ENCODE measurements at regions of chr4 and their contacts with region 1.

Region 1: GRCh38 chr4:80446664-80447063 is 111.1 kb downstream of the CFAP299 start:
- DNase-seq: no peak
- H3K4me3 Mint-ChIP-seq: no peak overlapping the region
- H3K27ac Mint-ChIP-seq: no peak overlapping the region
- H3K4me1 Mint-ChIP-seq: no peaks in the 10 kb centered on the region
- H3K27me3 Mint-ChIP-seq: no peaks in the 10 kb centered on the region

Region 2: DNA sequence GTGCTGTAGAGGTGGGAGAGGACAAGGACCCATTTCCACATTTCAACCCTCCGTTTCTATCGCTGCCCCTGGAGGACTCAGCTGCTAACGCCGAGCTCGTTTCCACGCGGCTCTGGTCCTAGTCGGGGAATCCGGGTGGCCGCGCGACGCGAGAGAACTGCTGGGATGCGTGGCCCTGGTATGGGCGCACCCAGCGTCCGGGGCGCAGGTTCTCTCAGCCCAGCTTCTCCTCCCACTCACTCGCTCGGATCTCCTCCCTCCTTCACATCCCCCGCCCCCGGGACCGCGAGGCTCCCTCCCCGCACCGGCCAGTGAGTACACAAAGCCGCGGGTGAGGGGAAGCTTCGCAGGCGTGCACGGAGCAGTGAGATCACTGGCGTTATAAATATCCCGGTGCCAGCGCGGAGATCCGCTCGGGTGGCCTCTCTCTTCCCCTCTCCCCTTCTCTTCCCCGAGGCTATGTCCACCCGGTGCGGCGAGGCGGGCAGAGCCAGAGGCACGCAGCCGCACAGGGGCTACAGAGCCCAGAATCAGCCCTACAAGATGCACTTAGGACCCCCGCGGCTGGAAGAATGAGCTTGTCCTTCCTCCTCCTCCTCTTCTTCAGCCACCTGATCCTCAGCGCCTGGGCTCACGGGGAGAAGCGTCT is 180.3 kb before region 1 on chr4 and contains the start of gene FGF5:
- CTCF ChIA-PET with region 1: no interaction called
- intact Hi-C with region 1: loop called (anchors 5 kb)
- DNase-seq: peak; percentile 51
- H3K4me3 Mint-ChIP-seq: peak within 1 kb of the TSS; percentile 67
- H3K27ac Mint-ChIP-seq: no peak within 1 kb of the TSS
- H3K4me1 Mint-ChIP-seq: peaks cover 31% of the 10 kb centered on the region
- H3K27me3 Mint-ChIP-seq: peaks cover 69% of the 10 kb centered on the region
- total RNA-seq, gene FGF5: not detected